PC-9 (cell line): ENCODE measurements at regions of chr17 and their contacts with region 1.

Region 1: GRCh38 chr17:35088881-35089585 is 25.5 kb upstream of the RFFL start:
- DNase-seq: peak; percentile 55 to 84
- H3K4me3 ChIP-seq: peak overlapping the region; percentile 80
- H3K27ac ChIP-seq: peak overlapping the region; percentile 78
- H3K4me1 ChIP-seq: peaks cover 42% of the 10 kb centered on the region
- H3K27me3 ChIP-seq: no peaks in the 10 kb centered on the region
- CTCF ChIP-seq: no peak; the same call in 1 of the 2 replicates

Region 2: GRCh38 chr17:34980681-34981537 is 108.1 kb before region 1 on chr17:
- CTCF ChIA-PET with region 1: no interaction called
- POLR2A ChIA-PET with region 1: interaction called, 4 read pairs
- intact Hi-C with region 1: loop called (anchors 5 kb)
- DNase-seq: peak; percentile 69 to 84
- H3K4me3 ChIP-seq: peak overlapping the region; percentile 62
- H3K27ac ChIP-seq: peak overlapping the region; percentile 87
- H3K4me1 ChIP-seq: peaks cover 9% of the 10 kb centered on the region
- H3K27me3 ChIP-seq: no peaks in the 10 kb centered on the region
- CTCF ChIP-seq: peak; percentile 48; the same call in 1 of the 2 replicates

Region 3: DNA sequence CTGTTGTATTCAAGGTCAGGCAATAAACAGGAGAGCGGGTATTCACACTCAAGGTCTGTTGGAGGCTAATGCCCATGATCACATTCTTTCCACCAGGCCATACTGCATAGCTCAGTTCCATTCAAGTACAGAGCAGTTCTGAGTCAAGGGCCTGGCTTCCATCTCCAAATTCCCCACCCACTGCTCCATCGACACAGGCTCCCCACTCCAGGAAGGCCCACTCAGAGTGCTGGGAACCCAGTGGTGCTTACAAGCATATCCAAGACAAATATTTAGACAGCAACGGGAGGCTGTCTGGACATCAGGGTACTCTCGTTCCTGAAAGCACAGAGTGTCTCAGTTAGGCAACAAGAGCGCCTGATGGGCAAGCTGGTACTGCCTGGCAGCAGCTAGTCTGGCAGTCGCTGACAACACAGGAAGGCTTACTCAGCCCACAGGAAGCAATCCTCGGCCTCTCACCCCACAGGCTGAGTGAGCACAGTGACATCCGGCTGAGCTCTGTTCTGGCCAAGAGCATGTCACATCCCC is 66.4 kb before region 1 on chr17:
- CTCF ChIA-PET with region 1: no interaction called
- POLR2A ChIA-PET with region 1: interaction called, 6 read pairs
- intact Hi-C with region 1: loop called (anchors 5 kb)
- DNase-seq: peak in 1 of 2 experiments; percentile 61
- H3K4me3 ChIP-seq: no peak overlapping the region
- H3K27ac ChIP-seq: peak overlapping the region; percentile 40
- H3K4me1 ChIP-seq: peaks cover 51% of the 10 kb centered on the region
- H3K27me3 ChIP-seq: no peaks in the 10 kb centered on the region
- CTCF ChIP-seq: no peak

Region 4: GRCh38 chr17:35063514-35064223 is 25.4 kb before region 1 on chr17 and contains the start of gene RFFL:
- CTCF ChIA-PET with region 1: no interaction called
- POLR2A ChIA-PET with region 1: interaction called, 4 read pairs
- intact Hi-C with region 1: loop called (anchors 1 kb)
- DNase-seq: peak; percentile 79 to 96
- H3K4me3 ChIP-seq: peak within 1 kb of the TSS; percentile 44; the same call in 1 of the 2 replicates
- H3K27ac ChIP-seq: peak within 1 kb of the TSS; percentile 99
- H3K4me1 ChIP-seq: peaks cover 37% of the 10 kb centered on the region
- H3K27me3 ChIP-seq: no peaks in the 10 kb centered on the region
- CTCF ChIP-seq: no peak
- total RNA-seq, gene RFFL: 36.7 and 38.1 TPM in 2 replicates

Region 5: GRCh38 chr17:35227546-35227945 is 138.5 kb after region 1 on chr17:
- CTCF ChIA-PET with region 1: no interaction called
- POLR2A ChIA-PET with region 1: no interaction called
- intact Hi-C with region 1: no loop called
- DNase-seq: no peak
- H3K4me3 ChIP-seq: no peak overlapping the region
- H3K27ac ChIP-seq: no peak overlapping the region
- H3K4me1 ChIP-seq: no peaks in the 10 kb centered on the region
- H3K27me3 ChIP-seq: peaks cover 34% of the 10 kb centered on the region
- CTCF ChIP-seq: no peak